ENCODE measurements at regions of chr1 and their contacts with region 1.

Region 1: DNA sequence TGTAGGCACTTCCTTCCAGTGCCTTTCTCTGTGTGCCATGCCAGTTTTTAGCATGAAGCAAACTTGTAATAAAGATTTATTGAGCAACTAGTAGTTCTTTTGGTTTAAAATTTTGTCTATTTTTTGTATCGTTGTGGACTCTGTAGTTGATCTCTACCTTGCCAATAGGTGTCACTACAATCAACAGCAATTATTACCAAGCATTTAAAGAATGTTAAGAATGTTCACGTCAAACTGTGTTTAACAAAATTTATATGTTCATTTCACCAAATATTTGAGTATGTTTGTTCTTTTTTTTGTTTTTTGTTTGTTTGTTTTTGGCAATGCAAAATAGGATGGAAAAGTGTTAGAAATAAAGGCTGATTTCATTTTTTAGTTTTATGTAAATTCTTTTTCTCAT is 208.1 kb downstream of the PATJ start:
- DNase-seq: peak; percentile 54
- H3K4me3 ChIP-seq: no peak overlapping the region
- H3K27ac ChIP-seq: no peak overlapping the region
- H3K4me1 ChIP-seq: peaks cover 38% of the 10 kb centered on the region
- H3K27me3 ChIP-seq: no peaks in the 10 kb centered on the region
- CTCF ChIP-seq: peak; percentile 66

Region 2: DNA sequence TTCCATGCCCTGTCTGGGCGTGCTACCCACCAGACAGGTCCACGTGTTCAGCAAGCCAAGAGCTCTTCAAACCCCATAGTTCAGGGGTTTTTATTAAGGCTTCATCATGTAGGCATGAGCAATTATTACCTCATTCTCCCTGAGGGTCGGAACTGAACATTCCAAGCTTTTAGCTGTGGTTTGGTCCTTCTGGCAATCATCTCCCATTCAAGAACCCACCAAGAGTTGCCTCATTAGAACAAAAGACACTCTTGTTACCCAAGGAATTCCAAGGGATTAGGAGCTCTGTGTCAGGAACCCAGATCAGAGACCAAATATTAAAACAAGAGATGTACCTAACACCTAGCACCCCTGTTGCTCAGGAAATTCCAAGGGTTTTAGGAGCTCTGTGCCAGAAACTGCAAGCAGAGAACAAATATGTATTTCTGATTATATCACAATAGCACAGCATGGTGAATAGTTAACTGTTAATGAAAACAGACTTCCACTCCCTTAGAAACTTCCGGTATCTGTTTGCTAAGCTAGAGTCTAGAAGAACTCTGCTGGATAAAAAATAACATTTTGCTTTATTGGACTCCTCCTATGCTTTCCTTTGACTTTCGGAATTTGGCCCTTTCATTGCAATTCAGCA is 43.0 kb after region 1 on chr1:
- CTCF ChIA-PET with region 1: interaction called, 3 read pairs
- POLR2A ChIA-PET with region 1: interaction called, 3 read pairs
- intact Hi-C with region 1: loop called (anchors 2 kb)
- DNase-seq: peak; percentile 95
- H3K4me3 ChIP-seq: no peak overlapping the region
- H3K27ac ChIP-seq: peak overlapping the region; percentile 77
- H3K4me1 ChIP-seq: peaks cover 64% of the 10 kb centered on the region
- H3K27me3 ChIP-seq: no peaks in the 10 kb centered on the region
- CTCF ChIP-seq: no peak

Region 3: DNA sequence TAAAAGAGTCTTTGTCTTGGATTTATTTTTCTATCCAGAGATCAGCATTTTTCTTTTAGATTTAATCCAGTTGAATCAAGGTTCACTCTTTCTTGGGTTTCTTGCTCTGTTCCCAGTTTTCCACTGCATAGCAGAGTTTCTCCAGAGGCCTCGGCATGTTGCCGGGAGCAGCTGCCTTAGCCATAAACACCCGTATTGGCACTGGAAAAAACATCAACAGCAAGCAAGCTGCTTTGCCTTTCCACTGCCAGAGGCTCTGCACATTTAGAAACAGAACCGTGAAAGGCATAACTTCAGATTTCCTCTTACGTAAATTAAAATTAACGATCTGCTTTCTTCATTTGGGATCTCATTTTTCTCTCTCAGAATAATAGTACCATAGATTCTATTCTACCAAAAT is 62.4 kb after region 1 on chr1:
- CTCF ChIA-PET with region 1: no interaction called
- POLR2A ChIA-PET with region 1: no interaction called
- intact Hi-C with region 1: no loop called
- DNase-seq: no peak
- H3K4me3 ChIP-seq: no peak overlapping the region
- H3K27ac ChIP-seq: no peak overlapping the region
- H3K4me1 ChIP-seq: no peaks in the 10 kb centered on the region
- H3K27me3 ChIP-seq: no peaks in the 10 kb centered on the region
- CTCF ChIP-seq: no peak

Region 4: GRCh38 chr1:62070384-62071011 is 120.1 kb after region 1 on chr1:
- CTCF ChIA-PET with region 1: interaction called, 6 read pairs
- POLR2A ChIA-PET with region 1: no interaction called
- intact Hi-C with region 1: loop called (anchors 10 kb)
- DNase-seq: peak; percentile 33
- H3K4me3 ChIP-seq: no peak overlapping the region
- H3K27ac ChIP-seq: no peak overlapping the region
- H3K4me1 ChIP-seq: no peaks in the 10 kb centered on the region
- H3K27me3 ChIP-seq: no peaks in the 10 kb centered on the region
- CTCF ChIP-seq: peak; percentile 87

Region 5: DNA sequence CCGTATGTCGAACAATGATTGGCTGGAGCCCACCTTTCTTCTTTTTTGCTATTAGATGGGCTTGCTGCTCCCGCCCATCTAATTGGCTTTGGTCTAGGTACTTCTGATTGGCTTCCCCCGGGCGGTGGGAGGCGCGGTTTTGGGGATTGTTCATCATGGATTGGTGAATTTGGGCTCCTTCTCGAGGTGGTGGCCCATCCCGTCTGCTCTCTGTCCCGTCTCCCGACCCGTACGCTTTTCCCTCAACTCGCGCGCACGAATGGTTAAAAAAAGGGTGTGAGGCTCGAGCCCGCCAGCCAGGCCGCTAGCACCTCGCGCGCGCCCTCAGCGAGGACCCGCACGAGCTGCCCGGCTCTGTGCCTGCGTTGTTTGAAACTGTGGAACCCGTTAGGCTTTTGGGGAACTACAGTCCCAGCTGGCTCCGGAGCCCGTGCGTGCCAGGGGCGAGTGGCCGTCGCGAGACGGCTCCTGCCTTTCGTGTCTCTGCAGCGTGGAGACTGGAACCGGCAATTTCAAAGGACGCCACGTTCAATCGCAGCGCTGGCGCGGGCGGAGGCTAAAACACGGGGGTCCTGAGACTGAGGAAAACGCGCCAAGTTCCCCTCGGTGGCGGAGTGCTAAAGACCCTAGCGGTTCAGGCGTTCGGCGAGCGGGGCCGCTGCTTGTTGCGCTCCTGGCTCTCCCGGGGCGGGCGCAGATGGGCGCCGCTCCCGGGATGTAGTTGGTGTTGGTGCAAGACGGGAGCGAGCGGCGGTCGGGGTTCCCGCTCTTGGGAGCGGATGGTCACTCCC is 486.2 kb after region 1 on chr1 and contains the start of gene USP1:
- CTCF ChIA-PET with region 1: no interaction called
- POLR2A ChIA-PET with region 1: no interaction called
- intact Hi-C with region 1: loop called (anchors 10 kb)
- DNase-seq: peak; percentile 93
- H3K4me3 ChIP-seq: peak within 1 kb of the TSS; percentile 93
- H3K27ac ChIP-seq: peak within 1 kb of the TSS; percentile 100
- H3K4me1 ChIP-seq: peaks cover 26% of the 10 kb centered on the region
- H3K27me3 ChIP-seq: no peaks in the 10 kb centered on the region
- CTCF ChIP-seq: no peak
- total RNA-seq, gene USP1: 85.9 and 90.0 TPM in 2 replicates

Measured in A673 (cell line).